HEK293T (cell line): ENCODE measurements at regions of chr3 and their contacts with region 1.

Region 1: GRCh38 chr3:48151058-48151806 is 37.0 kb downstream of the CDC25A start:
- DNase-seq: peak; percentile 83

Region 2: GRCh38 chr3:47836986-47837385 is 314.2 kb before region 1 on chr3:
- CTCF ChIA-PET with region 1: interaction called, 21 read pairs
- POLR2A ChIA-PET with region 1: no interaction called
- DNase-seq: no peak

Region 3: GRCh38 chr3:47852604-47853602 is 298.3 kb before region 1 on chr3:
- CTCF ChIA-PET with region 1: interaction called, 10 read pairs
- POLR2A ChIA-PET with region 1: interaction called, 3 read pairs
- DNase-seq: no peak

Region 4: GRCh38 chr3:48088749-48089466 is 62.3 kb before region 1 on chr3:
- CTCF ChIA-PET with region 1: interaction called, 4 read pairs
- POLR2A ChIA-PET with region 1: interaction called, 11 read pairs
- DNase-seq: peak; percentile 92

Region 5: GRCh38 chr3:48180531-48181253 is 29.5 kb after region 1 on chr3:
- CTCF ChIA-PET with region 1: no interaction called
- POLR2A ChIA-PET with region 1: no interaction called
- DNase-seq: no peak

Region 6: GRCh38 chr3:48215466-48215865 is 64.2 kb after region 1 on chr3:
- CTCF ChIA-PET with region 1: no interaction called
- POLR2A ChIA-PET with region 1: no interaction called
- DNase-seq: no peak